A673 (cell line): ENCODE measurements at regions of chrX and their contacts with region 1.

Region 1: GRCh38 chrX:13646154-13646549 is 6.8 kb upstream of the TCEANC start:
- DNase-seq: peak; percentile 80
- H3K4me3 ChIP-seq: no peak overlapping the region
- H3K27ac ChIP-seq: no peak overlapping the region
- H3K4me1 ChIP-seq: peaks cover 4% of the 10 kb centered on the region
- H3K27me3 ChIP-seq: no peaks in the 10 kb centered on the region
- CTCF ChIP-seq: peak; percentile 81

Region 2: DNA sequence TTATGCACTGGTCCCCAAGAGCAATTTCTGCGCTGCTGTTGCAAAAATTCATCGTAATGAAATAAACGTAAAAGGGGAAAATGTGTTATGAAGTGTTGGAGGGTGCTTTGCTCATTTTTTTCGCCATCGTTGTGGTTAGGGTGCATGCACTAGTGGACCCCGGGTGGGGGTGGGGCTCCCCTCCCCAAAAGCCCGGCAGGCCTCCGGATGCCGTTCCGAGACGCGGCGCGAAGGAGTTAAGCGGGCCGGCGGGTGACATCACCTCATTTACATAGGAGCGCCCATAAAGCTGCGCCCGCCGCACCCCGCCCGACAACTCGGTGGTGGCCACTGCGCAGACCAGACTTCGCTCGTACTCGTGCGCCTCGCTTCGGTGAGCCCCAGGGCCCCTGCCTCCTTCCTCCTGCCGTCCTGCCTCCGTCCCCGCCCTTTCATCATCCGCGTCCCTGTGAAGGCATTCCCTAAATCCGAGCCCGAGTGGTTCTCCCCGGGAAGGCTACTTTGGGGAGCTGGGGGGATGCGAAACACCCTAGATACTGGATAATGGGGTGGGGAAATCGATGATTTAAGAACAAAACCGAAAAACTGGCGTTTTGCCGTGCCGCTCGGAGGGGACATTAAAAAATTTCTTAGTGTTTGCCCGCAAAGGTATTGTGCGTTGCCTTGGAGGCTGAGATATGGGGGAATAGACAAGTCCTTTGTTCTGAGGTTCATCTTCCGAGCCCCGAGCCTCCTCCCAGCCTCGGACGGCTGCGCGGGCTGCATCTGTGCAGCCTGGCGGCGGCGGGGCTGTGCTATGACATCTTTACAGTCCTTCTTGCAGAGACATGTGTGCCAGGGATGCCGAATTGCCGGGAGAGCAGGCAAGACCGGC is 671.1 kb before region 1 on chrX and contains the start of gene TMSB4X:
- CTCF ChIA-PET with region 1: no interaction called
- POLR2A ChIA-PET with region 1: no interaction called
- intact Hi-C with region 1: loop called (anchors 10 kb)
- DNase-seq: peak; percentile 85
- H3K4me3 ChIP-seq: peak within 1 kb of the TSS; percentile 62
- H3K27ac ChIP-seq: peak within 1 kb of the TSS; percentile 81
- H3K4me1 ChIP-seq: peaks cover 6% of the 10 kb centered on the region
- H3K27me3 ChIP-seq: no peaks in the 10 kb centered on the region
- CTCF ChIP-seq: no peak
- total RNA-seq, gene TMSB4X: 975 and 1,093 TPM in 2 replicates

Region 3: DNA sequence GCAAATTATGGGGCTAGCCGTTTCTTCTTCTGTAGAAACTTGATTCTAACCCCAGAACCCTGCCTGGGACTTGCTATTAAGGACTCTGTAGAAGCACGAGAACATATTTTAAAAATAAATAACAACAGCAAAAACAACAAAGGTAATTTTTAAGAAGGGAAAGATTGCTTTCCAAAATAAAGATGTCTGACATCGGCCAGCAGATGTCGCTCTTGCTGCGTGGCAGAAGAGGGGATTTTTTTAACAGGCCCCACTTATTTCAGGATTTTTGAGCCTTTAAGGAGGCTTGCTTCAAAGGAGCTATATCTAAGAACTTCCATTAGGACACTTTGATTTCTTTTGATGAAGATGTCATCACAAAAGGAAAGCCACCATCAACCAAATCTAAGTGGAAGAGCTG is 139.6 kb before region 1 on chrX:
- CTCF ChIA-PET with region 1: interaction called, 38 read pairs
- POLR2A ChIA-PET with region 1: interaction called, 4 read pairs
- intact Hi-C with region 1: loop called (anchors 1 kb)
- DNase-seq: peak; percentile 75
- H3K4me3 ChIP-seq: no peak overlapping the region
- H3K27ac ChIP-seq: no peak overlapping the region
- H3K4me1 ChIP-seq: no peaks in the 10 kb centered on the region
- H3K27me3 ChIP-seq: no peaks in the 10 kb centered on the region
- CTCF ChIP-seq: peak; percentile 87

Region 4: GRCh38 chrX:13515211-13515930 is 130.8 kb before region 1 on chrX:
- CTCF ChIA-PET with region 1: interaction called, 6 read pairs
- POLR2A ChIA-PET with region 1: no interaction called
- intact Hi-C with region 1: loop called (anchors 2 kb)
- DNase-seq: peak; percentile 95
- H3K4me3 ChIP-seq: no peak overlapping the region
- H3K27ac ChIP-seq: peak overlapping the region; percentile 38
- H3K4me1 ChIP-seq: peaks cover 23% of the 10 kb centered on the region
- H3K27me3 ChIP-seq: no peaks in the 10 kb centered on the region
- CTCF ChIP-seq: no peak

Region 5: GRCh38 chrX:13545726-13546125 is 100.4 kb before region 1 on chrX:
- CTCF ChIA-PET with region 1: interaction called, 13 read pairs
- POLR2A ChIA-PET with region 1: no interaction called
- intact Hi-C with region 1: no loop called
- DNase-seq: no peak
- H3K4me3 ChIP-seq: no peak overlapping the region
- H3K27ac ChIP-seq: no peak overlapping the region
- H3K4me1 ChIP-seq: no peaks in the 10 kb centered on the region
- H3K27me3 ChIP-seq: peaks cover 16% of the 10 kb centered on the region
- CTCF ChIP-seq: no peak

Region 6: GRCh38 chrX:13598877-13599276 is 47.3 kb before region 1 on chrX:
- CTCF ChIA-PET with region 1: interaction called, 22 read pairs
- POLR2A ChIA-PET with region 1: no interaction called
- intact Hi-C with region 1: no loop called
- DNase-seq: peak; percentile 14
- H3K4me3 ChIP-seq: no peak overlapping the region
- H3K27ac ChIP-seq: no peak overlapping the region
- H3K4me1 ChIP-seq: no peaks in the 10 kb centered on the region
- H3K27me3 ChIP-seq: peaks cover 8% of the 10 kb centered on the region
- CTCF ChIP-seq: peak; percentile 41; the same call in 1 of the 2 replicates

Region 7: GRCh38 chrX:14842696-14843095 is 1196.5 kb after region 1 on chrX:
- CTCF ChIA-PET with region 1: no interaction called
- POLR2A ChIA-PET with region 1: no interaction called
- intact Hi-C with region 1: no loop called
- DNase-seq: no peak
- H3K4me3 ChIP-seq: no peak overlapping the region
- H3K27ac ChIP-seq: no peak overlapping the region
- H3K4me1 ChIP-seq: no peaks in the 10 kb centered on the region
- H3K27me3 ChIP-seq: no peaks in the 10 kb centered on the region
- CTCF ChIP-seq: no peak